Kidney (tissue), 22 donors: ENCODE measurements at regions of chr15 and their contacts with region 1.

Region 1: DNA sequence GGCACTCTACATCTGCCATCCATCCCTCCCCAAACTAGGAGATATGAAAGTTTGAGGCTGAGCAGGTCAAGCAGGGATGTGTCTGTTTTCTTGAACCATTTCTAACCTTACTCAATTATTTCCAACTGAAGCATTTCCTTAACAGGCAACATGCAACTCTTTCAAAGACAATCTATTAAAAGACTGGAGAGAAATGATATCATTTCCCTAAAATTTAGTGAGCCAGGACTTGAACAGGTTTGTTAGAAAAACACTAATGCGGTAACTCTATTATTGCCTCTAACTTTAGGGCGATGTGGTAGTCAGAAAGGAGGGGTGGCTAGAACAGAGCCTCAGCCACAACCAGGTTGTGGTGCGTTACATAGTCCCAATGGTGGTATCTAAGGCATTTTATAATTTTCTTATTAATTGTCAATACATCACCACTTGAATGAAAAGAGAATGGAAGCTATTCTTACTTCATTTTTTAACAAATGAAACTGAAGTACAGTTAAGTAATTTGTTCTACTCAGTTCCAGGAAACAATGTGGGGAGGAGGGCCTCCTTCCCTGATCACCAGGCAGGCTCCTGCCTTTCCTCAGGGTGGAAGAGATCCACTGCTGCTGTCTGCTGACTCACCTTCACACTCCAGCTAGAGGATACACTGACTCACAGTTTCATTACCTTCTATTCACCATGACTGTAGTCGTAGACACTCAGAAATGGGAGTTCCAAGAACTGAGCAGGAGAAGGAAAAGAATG is 22.8 kb downstream of the MYO1E start:
- DNase-seq: no peak
- H3K4me3 ChIP-seq: no peak overlapping the region
- H3K27ac ChIP-seq: peak overlapping the region in 1 of 2 donors; percentile 28
- H3K4me1 ChIP-seq: peaks cover 0 to 5% (median 0%) of the 10 kb centered on the region in 3 donors
- H3K27me3 ChIP-seq: no peaks in the 10 kb centered on the region
- CTCF ChIP-seq: no peak

Region 2: DNA sequence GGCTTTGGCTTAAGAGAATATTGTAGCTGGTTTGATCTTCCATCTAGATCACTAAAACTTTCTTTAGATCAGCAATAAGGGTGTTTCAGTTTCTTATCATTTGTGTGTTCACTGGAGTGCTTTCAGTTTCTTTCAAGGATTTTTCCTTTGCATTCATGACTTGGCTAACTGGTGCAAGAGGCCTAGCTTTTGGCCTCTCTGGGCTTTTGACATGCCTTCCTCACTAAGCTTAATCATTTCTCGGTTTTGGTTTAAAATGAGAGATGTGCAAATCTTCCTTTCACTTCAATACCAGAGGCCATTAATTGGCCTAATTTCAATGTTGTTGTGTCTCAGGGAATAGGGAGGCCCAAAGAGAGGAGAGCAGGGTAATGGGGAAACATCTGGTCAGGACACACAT is 275.2 kb before region 1 on chr15:
- intact Hi-C with region 1: no loop called
- DNase-seq: no peak
- H3K4me3 ChIP-seq: no peak overlapping the region
- H3K27ac ChIP-seq: no peak overlapping the region
- H3K4me1 ChIP-seq: no peaks in the 10 kb centered on the region
- H3K27me3 ChIP-seq: no peaks in the 10 kb centered on the region
- CTCF ChIP-seq: no peak

Region 3: GRCh38 chr15:59247364-59247763 is 102.5 kb before region 1 on chr15:
- intact Hi-C with region 1: no loop called
- DNase-seq: peak in 4 of 5 donors; percentile 62 to 82 (median 74)
- H3K4me3 ChIP-seq: no peak overlapping the region
- H3K27ac ChIP-seq: no peak overlapping the region
- H3K4me1 ChIP-seq: peaks cover 0 to 5% (median 3%) of the 10 kb centered on the region in 3 donors
- H3K27me3 ChIP-seq: no peaks in the 10 kb centered on the region
- CTCF ChIP-seq: peak; percentile 43

Region 4: GRCh38 chr15:59299929-59300617 is 49.8 kb before region 1 on chr15:
- intact Hi-C with region 1: loop called (anchors 10 kb)
- DNase-seq: peak in 4 of 5 donors; percentile 39 to 85 (median 78)
- H3K4me3 ChIP-seq: peak overlapping the region in 1 of 3 donors; percentile 27
- H3K27ac ChIP-seq: peak overlapping the region; percentile 48 to 70
- H3K4me1 ChIP-seq: peaks cover 2 to 25% (median 23%) of the 10 kb centered on the region in 3 donors
- H3K27me3 ChIP-seq: no peaks in the 10 kb centered on the region
- CTCF ChIP-seq: no peak